H1 (cell line): ENCODE measurements at regions of chr15 and their contacts with region 1.

Region 1: GRCh38 chr15:68631601-68632051 is 52.8 kb downstream of the CORO2B start:
- DNase-seq: no peak
- H3K4me3 ChIP-seq: no peak overlapping the region
- H3K27ac ChIP-seq: no peak overlapping the region
- H3K4me1 ChIP-seq: peaks cover 0 to 8% (median 1%) of the 10 kb centered on the region in 4 experiments; a peak in 2 of 7 replicates
- H3K27me3 ChIP-seq: no peaks in the 10 kb centered on the region
- CTCF ChIP-seq: peak; percentile 73 to 98 (median 81)
- EP300 ChIP-seq: peak in 1 of 2 experiments; percentile 37; a peak in 1 of 3 replicates
- POLR2A ChIP-seq: no peak
- RAD21 ChIP-seq: peak; percentile 67 to 78

Region 2: GRCh38 chr15:68550481-68551295 is 80.9 kb before region 1 on chr15:
- CTCF ChIA-PET with region 1: interaction called, 16 read pairs
- POLR2A ChIA-PET with region 1: no interaction called
- DNase-seq: peak; percentile 44 to 97
- H3K4me3 ChIP-seq: no peak overlapping the region
- H3K27ac ChIP-seq: no peak overlapping the region
- H3K4me1 ChIP-seq: no peaks in the 10 kb centered on the region
- H3K27me3 ChIP-seq: no peaks in the 10 kb centered on the region; a peak in 1 of 7 replicates
- CTCF ChIP-seq: peak; percentile 73 to 96 (median 87)
- EP300 ChIP-seq: no peak
- POLR2A ChIP-seq: no peak
- RAD21 ChIP-seq: peak; percentile 92 to 97

Region 3: GRCh38 chr15:68559345-68560310 is 72.0 kb before region 1 on chr15:
- CTCF ChIA-PET with region 1: interaction called, 19 read pairs
- POLR2A ChIA-PET with region 1: no interaction called
- DNase-seq: peak; percentile 80 to 95
- H3K4me3 ChIP-seq: peak overlapping the region; percentile 36 to 68 (median 52)
- H3K27ac ChIP-seq: no peak overlapping the region
- H3K4me1 ChIP-seq: peaks cover 0 to 22% (median 16%) of the 10 kb centered on the region in 4 experiments; a peak in 6 of 7 replicates
- H3K27me3 ChIP-seq: peaks cover 0 to 7% (median 4%) of the 10 kb centered on the region in 4 experiments; a peak in 3 of 7 replicates
- CTCF ChIP-seq: peak; percentile 86 to 93 (median 90)
- EP300 ChIP-seq: no peak
- POLR2A ChIP-seq: peak in 1 of 2 experiments; percentile 41; a peak in 1 of 3 replicates
- RAD21 ChIP-seq: peak; percentile 78 to 86

Region 4: DNA sequence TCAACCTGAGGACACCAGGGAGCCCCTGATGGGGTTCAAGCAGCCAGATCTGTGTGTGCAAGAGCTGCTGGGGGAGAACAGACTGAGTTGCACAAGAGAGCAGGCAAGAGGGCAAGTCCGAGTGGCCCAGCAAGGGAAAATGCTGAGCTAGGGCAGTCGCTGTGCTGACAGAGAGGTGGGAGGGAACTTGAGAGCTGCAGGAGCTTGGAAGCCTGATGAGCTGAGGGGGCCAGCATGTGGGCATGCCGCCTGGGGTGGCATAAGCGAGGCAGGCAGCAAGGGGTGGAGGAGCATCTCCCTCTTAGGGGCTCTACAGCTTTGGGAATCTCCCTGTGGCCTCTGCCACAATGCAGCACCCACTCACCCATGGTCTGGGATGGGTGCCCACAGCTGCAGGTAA is 57.6 kb before region 1 on chr15:
- CTCF ChIA-PET with region 1: interaction called, 10 read pairs
- POLR2A ChIA-PET with region 1: no interaction called
- DNase-seq: no peak
- H3K4me3 ChIP-seq: no peak overlapping the region
- H3K27ac ChIP-seq: no peak overlapping the region
- H3K4me1 ChIP-seq: peaks cover 16 to 55% (median 34%) of the 10 kb centered on the region in 4 experiments
- H3K27me3 ChIP-seq: peaks cover 0 to 22% (median 15%) of the 10 kb centered on the region in 4 experiments; a peak in 5 of 7 replicates
- CTCF ChIP-seq: no peak
- EP300 ChIP-seq: no peak
- POLR2A ChIP-seq: no peak
- RAD21 ChIP-seq: no peak

Region 5: GRCh38 chr15:68614286-68615035 is 17.2 kb before region 1 on chr15:
- CTCF ChIA-PET with region 1: interaction called, 22 read pairs
- POLR2A ChIA-PET with region 1: no interaction called
- DNase-seq: peak; percentile 19 to 78
- H3K4me3 ChIP-seq: peak overlapping the region in 1 of 4 experiments; percentile 25; a peak in 2 of 8 replicates
- H3K27ac ChIP-seq: peak overlapping the region; percentile 44; the same call in 1 of the 2 replicates
- H3K4me1 ChIP-seq: peaks cover 7 to 17% (median 11%) of the 10 kb centered on the region in 4 experiments
- H3K27me3 ChIP-seq: no peaks in the 10 kb centered on the region
- CTCF ChIP-seq: peak in 1 of 3 experiments; percentile 10; a peak in 1 of 4 replicates
- EP300 ChIP-seq: no peak
- POLR2A ChIP-seq: no peak
- RAD21 ChIP-seq: no peak; a peak in 1 of 4 replicates

Region 6: DNA sequence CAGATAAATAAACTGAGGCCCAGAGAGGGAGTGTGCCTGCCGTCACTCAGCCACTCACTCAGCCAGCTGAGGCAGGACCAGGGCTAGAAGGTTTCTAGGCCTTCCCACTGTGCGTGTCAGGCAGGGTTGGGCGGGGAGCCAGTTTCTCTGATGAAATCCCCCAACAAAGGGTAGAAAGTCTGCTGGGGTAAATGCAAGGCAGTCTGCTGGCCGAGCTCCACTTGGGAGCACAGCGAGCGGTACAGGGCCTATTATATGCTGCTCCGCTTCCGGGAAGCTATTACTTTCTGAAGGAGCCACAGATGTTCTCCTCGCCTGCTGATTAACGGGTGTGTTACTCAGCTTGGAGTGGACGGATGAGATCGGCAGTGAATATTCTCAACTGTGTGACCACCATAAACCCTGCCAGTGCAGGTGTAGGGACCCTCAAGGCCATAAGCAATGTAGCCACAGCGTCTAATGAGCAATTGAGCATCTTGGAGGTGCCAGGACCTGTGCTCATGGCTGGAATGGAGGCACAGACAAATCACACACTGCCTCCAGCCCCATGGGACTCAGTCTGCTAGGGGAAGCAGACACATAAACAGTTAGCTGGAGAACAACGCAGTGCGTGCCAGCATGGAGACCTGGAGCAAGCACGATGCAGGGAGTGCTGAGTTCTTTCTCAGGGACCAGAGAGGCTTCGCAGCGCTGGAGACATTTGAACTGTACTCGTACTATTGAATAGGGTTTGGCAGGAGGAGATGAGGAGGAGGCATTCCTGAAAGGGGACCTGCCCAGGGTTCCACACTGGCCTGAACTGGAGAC is 10.7 kb before region 1 on chr15:
- CTCF ChIA-PET with region 1: interaction called, 16 read pairs
- POLR2A ChIA-PET with region 1: no interaction called
- DNase-seq: no peak
- H3K4me3 ChIP-seq: no peak overlapping the region
- H3K27ac ChIP-seq: 0 out of 2 replicates have a peak overlapping the region, but pooled peaks have one; percentile 12
- H3K4me1 ChIP-seq: peaks cover 0 to 5% (median 1%) of the 10 kb centered on the region in 4 experiments; a peak in 2 of 7 replicates
- H3K27me3 ChIP-seq: no peaks in the 10 kb centered on the region
- CTCF ChIP-seq: no peak
- EP300 ChIP-seq: no peak
- POLR2A ChIP-seq: no peak
- RAD21 ChIP-seq: no peak

Region 7: GRCh38 chr15:68644077-68644904 is 12.7 kb after region 1 on chr15:
- CTCF ChIA-PET with region 1: interaction called, 569 read pairs
- POLR2A ChIA-PET with region 1: interaction called, 3 read pairs
- DNase-seq: no peak
- H3K4me3 ChIP-seq: no peak overlapping the region
- H3K27ac ChIP-seq: no peak overlapping the region
- H3K4me1 ChIP-seq: peaks cover 0 to 12% (median 5%) of the 10 kb centered on the region in 4 experiments; a peak in 5 of 7 replicates
- H3K27me3 ChIP-seq: no peaks in the 10 kb centered on the region
- CTCF ChIP-seq: peak in 2 of 3 experiments; percentile 16 to 18; a peak in 2 of 4 replicates
- EP300 ChIP-seq: no peak
- POLR2A ChIP-seq: no peak
- RAD21 ChIP-seq: peak; percentile 31 to 51